HCT116 (cell line): ENCODE measurements at regions of chr9 and their contacts with region 1.

Region 1: DNA sequence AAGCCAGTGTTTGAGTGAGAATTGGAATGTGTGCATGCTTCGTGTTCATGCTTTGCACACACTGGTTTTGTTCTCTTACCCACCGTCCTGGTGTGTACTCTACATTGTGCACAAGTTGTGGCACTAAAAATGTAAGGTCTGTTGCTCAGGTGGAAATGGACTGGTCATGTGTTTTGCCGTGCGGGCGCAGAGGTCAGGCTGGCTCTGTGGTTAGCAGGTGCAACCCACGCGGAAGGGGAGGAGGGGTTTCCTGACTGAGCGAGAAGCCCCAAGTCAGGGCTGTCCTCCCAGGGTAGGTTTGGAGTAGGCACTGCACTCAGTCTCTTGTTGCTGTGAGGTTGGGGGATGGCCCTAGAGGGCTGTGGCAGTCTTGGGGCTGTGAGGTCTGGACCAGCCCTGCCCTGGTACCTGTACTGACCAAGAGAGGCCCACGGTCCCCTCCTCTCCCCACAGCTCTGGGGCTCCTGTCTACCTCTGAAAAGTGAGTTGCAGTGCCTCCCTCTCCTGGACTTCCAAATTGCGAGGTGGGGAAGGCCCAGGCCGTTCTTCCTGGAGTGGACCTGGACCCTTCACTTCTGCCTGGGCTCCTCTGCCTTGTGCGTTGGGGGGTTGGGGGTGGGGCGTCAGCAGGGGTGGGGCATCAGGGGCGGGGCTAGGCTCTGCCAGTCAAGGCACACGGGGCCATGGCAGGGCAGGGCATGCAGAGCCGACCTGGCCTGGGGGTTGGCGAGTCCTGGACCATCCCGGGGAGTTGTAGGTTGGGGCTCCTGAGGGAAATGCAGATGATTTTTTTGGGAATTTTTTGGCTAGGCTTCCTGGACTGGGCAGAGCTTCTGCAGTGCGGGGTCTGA is 86.9 kb downstream of the EHMT1 start:
- DNase-seq: no peak
- ATAC-seq: peak; percentile 36; the same call in 1 of the 2 replicates
- H3K4me3 ChIP-seq: no peak overlapping the region
- H3K27ac ChIP-seq: no peak overlapping the region
- H3K4me1 ChIP-seq: peaks cover 0 to 5% of the 10 kb centered on the region in 2 experiments; a peak in 2 of 4 replicates
- H3K27me3 ChIP-seq: no peaks in the 10 kb centered on the region
- CTCF ChIP-seq: no peak
- POLR2A ChIP-seq: no peak
- RAD21 ChIP-seq: no peak

Region 2: GRCh38 chr9:137630679-137631078 is 75.0 kb before region 1 on chr9:
- CTCF ChIA-PET with region 1: no interaction called
- POLR2A ChIA-PET with region 1: no interaction called
- RAD21 ChIA-PET with region 1: no interaction called
- intact Hi-C with region 1: loop called (anchors 2 kb)
- DNase-seq: no peak
- ATAC-seq: no peak
- H3K4me3 ChIP-seq: no peak overlapping the region
- H3K27ac ChIP-seq: no peak overlapping the region
- H3K4me1 ChIP-seq: no peaks in the 10 kb centered on the region
- H3K27me3 ChIP-seq: no peaks in the 10 kb centered on the region
- CTCF ChIP-seq: no peak
- POLR2A ChIP-seq: no peak
- RAD21 ChIP-seq: no peak